Heart right ventricle (tissue), 16 donors: ENCODE measurements at regions of chr2 and their contacts with region 1.

Region 1: GRCh38 chr2:147649286-147649685 is 195.5 kb upstream of the ACVR2A start:
- DNase-seq: no peak
- ATAC-seq: no peak
- H3K4me3 ChIP-seq: no peak overlapping the region
- H3K27ac ChIP-seq: no peak overlapping the region
- H3K4me1 ChIP-seq: no peaks in the 10 kb centered on the region
- H3K27me3 ChIP-seq: peaks cover 0 to 3% (median 0%) of the 10 kb centered on the region in 7 donors
- CTCF ChIP-seq: no peak

Region 2: DNA sequence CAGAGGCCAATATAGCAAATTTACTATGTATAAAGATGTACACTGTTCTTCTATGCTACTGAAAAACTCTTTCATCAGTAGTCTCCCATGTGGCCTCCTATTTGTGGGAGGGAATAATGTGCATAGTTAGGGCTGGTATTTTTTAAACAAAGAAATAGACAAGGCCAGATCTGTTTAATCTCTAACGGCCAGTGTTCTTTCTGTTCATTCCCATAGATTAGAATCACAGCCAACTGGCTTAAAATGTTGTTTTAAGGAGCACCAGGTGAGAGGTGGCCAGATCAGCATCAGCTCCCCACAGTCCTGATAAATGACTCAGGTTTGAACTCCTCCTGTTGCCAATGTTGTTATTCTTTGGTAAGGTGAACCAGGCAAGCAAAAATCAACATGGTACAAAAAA is 1693.2 kb after region 1 on chr2:
- intact Hi-C with region 1: loop called in 1 of 10 experiments (anchors 5 kb)
- DNase-seq: no peak
- ATAC-seq: no peak
- H3K4me3 ChIP-seq: no peak overlapping the region
- H3K27ac ChIP-seq: no peak overlapping the region
- H3K4me1 ChIP-seq: no peaks in the 10 kb centered on the region
- H3K27me3 ChIP-seq: peaks cover 0 to 8% (median 0%) of the 10 kb centered on the region in 7 donors
- CTCF ChIP-seq: no peak